Sigmoid colon (tissue), 7 donors: ENCODE measurements at regions of chr7 and their contacts with region 1.

Region 1: DNA sequence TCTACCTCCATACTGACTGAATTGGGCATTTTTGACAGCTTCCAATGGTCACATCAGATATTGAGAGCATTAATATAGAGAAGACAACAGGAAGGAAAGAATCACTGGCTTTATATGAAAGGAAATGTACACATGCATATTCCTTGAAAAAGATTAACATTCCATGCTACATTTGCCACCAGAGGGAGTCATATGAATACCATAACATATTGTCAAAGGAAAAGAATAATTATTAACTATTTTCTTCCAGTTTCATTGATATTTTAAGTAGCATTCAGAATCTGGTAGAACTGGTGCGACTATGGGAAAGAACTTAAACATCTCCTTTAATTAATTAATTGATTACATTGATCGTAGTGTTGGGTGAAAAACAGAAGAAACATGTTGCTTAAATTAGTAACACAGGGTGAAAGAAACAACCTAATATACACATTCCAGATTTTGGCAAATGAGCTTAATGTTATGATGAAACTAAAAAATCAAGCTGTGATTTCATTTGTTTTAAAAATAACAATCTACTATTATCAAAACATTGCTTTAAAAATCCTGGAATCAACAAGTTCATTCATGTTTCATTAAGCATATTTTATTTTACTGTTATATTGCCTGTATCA is 71.5 kb downstream of the GPR85 start:
- DNase-seq: no peak
- H3K4me3 ChIP-seq: no peak overlapping the region
- H3K27ac ChIP-seq: no peak overlapping the region
- H3K4me1 ChIP-seq: no peaks in the 10 kb centered on the region
- H3K27me3 ChIP-seq: no peaks in the 10 kb centered on the region
- CTCF ChIP-seq: peak in 2 of 4 experiments; percentile 19 to 44
- EP300 ChIP-seq: no peak
- POLR2A ChIP-seq: no peak

Region 2: GRCh38 chr7:113086431-113086888 is 71.3 kb after region 1 on chr7 and contains the start of gene GPR85:
- intact Hi-C with region 1: no loop called
- DNase-seq: peak; percentile 76
- H3K4me3 ChIP-seq: peak within 1 kb of the TSS; percentile 30 to 54 (median 52)
- H3K27ac ChIP-seq: peak within 1 kb of the TSS; percentile 28 to 61 (median 39)
- H3K4me1 ChIP-seq: peaks cover 0 to 18% (median 10%) of the 10 kb centered on the region in 4 donors
- H3K27me3 ChIP-seq: no peaks in the 10 kb centered on the region
- CTCF ChIP-seq: no peak
- EP300 ChIP-seq: no peak
- POLR2A ChIP-seq: no peak
- total RNA-seq, gene GPR85: 0.16 to 6.1 (median 0.67) TPM

Region 3: GRCh38 chr7:113705439-113705838 is 690.3 kb after region 1 on chr7:
- intact Hi-C with region 1: loop called (anchors 10 kb)
- DNase-seq: no peak
- H3K4me3 ChIP-seq: no peak overlapping the region
- H3K27ac ChIP-seq: no peak overlapping the region
- H3K4me1 ChIP-seq: peaks cover 0 to 19% (median 0%) of the 10 kb centered on the region in 4 donors
- H3K27me3 ChIP-seq: no peaks in the 10 kb centered on the region
- CTCF ChIP-seq: no peak
- EP300 ChIP-seq: no peak
- POLR2A ChIP-seq: no peak

Region 4: DNA sequence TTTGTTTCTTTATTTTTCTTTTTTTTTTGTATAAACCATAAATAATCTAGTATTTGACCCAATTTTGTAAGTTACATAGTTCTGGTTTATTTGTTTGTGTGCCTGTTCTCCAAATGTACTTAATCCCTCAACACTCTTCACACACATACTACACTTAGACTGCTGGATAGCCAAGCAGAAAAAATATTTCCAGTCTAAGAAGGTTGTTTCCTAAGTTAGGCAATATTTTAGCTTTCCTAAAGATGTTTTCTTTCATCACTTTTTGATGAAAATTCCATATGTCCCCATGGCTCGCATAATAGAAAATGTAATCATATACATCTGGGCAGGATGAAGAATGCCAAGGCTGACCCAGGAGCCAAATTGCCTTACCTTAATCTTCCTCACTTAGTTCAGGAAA is 798.3 kb after region 1 on chr7:
- intact Hi-C with region 1: no loop called
- DNase-seq: no peak
- H3K4me3 ChIP-seq: no peak overlapping the region
- H3K27ac ChIP-seq: no peak overlapping the region
- H3K4me1 ChIP-seq: no peaks in the 10 kb centered on the region
- H3K27me3 ChIP-seq: no peaks in the 10 kb centered on the region
- CTCF ChIP-seq: no peak
- EP300 ChIP-seq: no peak
- POLR2A ChIP-seq: no peak